Breast epithelium (tissue), 4 donors: ENCODE measurements at regions of chr5 and their contacts with region 1.

Region 1: GRCh38 chr5:135551593-135552447 is 16.1 kb upstream of the NEUROG1 start:
- DNase-seq: peak; percentile 49 to 62
- H3K4me3 ChIP-seq: no peak overlapping the region
- H3K27ac ChIP-seq: no peak overlapping the region
- H3K4me1 ChIP-seq: no peaks in the 10 kb centered on the region
- H3K27me3 ChIP-seq: peaks cover 0 to 22% of the 10 kb centered on the region in 2 donors
- CTCF ChIP-seq: peak; percentile 71 to 77 (median 75)
- POLR2A ChIP-seq: no peak

Region 2: GRCh38 chr5:135466178-135467050 is 85.4 kb before region 1 on chr5:
- intact Hi-C with region 1: loop called (anchors 10 kb)
- DNase-seq: peak; percentile 45 to 80
- H3K4me3 ChIP-seq: peak overlapping the region in 1 of 3 donors; percentile 26
- H3K27ac ChIP-seq: no peak overlapping the region
- H3K4me1 ChIP-seq: no peaks in the 10 kb centered on the region
- H3K27me3 ChIP-seq: peaks cover 0 to 22% of the 10 kb centered on the region in 2 donors
- CTCF ChIP-seq: peak; percentile 47 to 82 (median 76)
- POLR2A ChIP-seq: no peak